AG04449 (cell line): ENCODE measurements at regions of chr1 and their contacts with region 1.

Region 1: GRCh38 chr1:43414634-43415223 is 25.0 kb downstream of the SZT2 start:
- DNase-seq: no peak
- H3K4me3 ChIP-seq: no peak overlapping the region
- CTCF ChIP-seq: peak; percentile 30

Region 2: GRCh38 chr1:43238085-43238484 is 176.6 kb before region 1 on chr1:
- CTCF ChIA-PET with region 1: interaction called, 184 read pairs
- POLR2A ChIA-PET with region 1: interaction called, 3 read pairs
- DNase-seq: no peak
- H3K4me3 ChIP-seq: no peak overlapping the region
- CTCF ChIP-seq: peak; percentile 65

Region 3: GRCh38 chr1:43398227-43398626 is 16.5 kb before region 1 on chr1:
- CTCF ChIA-PET with region 1: interaction called, 28 read pairs
- POLR2A ChIA-PET with region 1: no interaction called
- DNase-seq: no peak
- H3K4me3 ChIP-seq: no peak overlapping the region
- CTCF ChIP-seq: no peak